ENCODE measurements at regions of chr1 and their contacts with region 1.

Region 1: GRCh38 chr1:23496490-23497181 is 12.7 kb upstream of the ASAP3 start:
- DNase-seq: no peak
- ATAC-seq: peak; percentile 31
- H3K4me3 ChIP-seq: no peak overlapping the region
- H3K4me3 Mint-ChIP-seq: no peak overlapping the region
- H3K27ac ChIP-seq: no peak overlapping the region
- H3K27ac Mint-ChIP-seq: no peak overlapping the region
- H3K4me1 ChIP-seq: no peaks in the 10 kb centered on the region
- H3K4me1 Mint-ChIP-seq: peaks cover 0 to 5% (median 0%) of the 10 kb centered on the region in 7 donors
- H3K27me3 ChIP-seq: no peaks in the 10 kb centered on the region
- H3K27me3 Mint-ChIP-seq: peaks cover 0 to 14% (median 0%) of the 10 kb centered on the region in 5 donors

Region 2: GRCh38 chr1:23524716-23525401 is 28.2 kb after region 1 on chr1:
- CTCF ChIA-PET with region 1: interaction called, 26 read pairs
- POLR2A ChIA-PET with region 1: interaction called, 4 read pairs
- intact Hi-C with region 1: no loop called
- DNase-seq: peak in 2 of 9 donors; percentile 16 to 35
- ATAC-seq: peak; percentile 26
- H3K4me3 ChIP-seq: peak overlapping the region; percentile 9
- H3K4me3 Mint-ChIP-seq: peak overlapping the region; percentile 53 to 96 (median 70)
- H3K27ac ChIP-seq: peak overlapping the region; percentile 8
- H3K27ac Mint-ChIP-seq: peak overlapping the region in 4 of 9 donors; percentile 38 to 96 (median 58)
- H3K4me1 ChIP-seq: peaks cover 60% of the 10 kb centered on the region in 2 donors
- H3K4me1 Mint-ChIP-seq: peaks cover 39 to 76% (median 63%) of the 10 kb centered on the region in 7 donors
- H3K27me3 ChIP-seq: no peaks in the 10 kb centered on the region
- H3K27me3 Mint-ChIP-seq: no peaks in the 10 kb centered on the region

Measured in naive thymus-derived CD4-positive, alpha-beta T cell (primary cell).